Endothelial cell of umbilical vein (primary cell): ENCODE measurements at regions of chr5 and their contacts with region 1.

Region 1: GRCh38 chr5:138789771-138790242 is 36.6 kb downstream of the CTNNA1 start:
- DNase-seq: peak; percentile 50
- H3K4me3 ChIP-seq: no peak overlapping the region
- H3K27ac ChIP-seq: no peak overlapping the region
- H3K4me1 ChIP-seq: no peaks in the 10 kb centered on the region
- H3K27me3 ChIP-seq: no peaks in the 10 kb centered on the region
- CTCF ChIP-seq: peak; percentile 65 to 67
- POLR2A ChIP-seq: no peak

Region 2: DNA sequence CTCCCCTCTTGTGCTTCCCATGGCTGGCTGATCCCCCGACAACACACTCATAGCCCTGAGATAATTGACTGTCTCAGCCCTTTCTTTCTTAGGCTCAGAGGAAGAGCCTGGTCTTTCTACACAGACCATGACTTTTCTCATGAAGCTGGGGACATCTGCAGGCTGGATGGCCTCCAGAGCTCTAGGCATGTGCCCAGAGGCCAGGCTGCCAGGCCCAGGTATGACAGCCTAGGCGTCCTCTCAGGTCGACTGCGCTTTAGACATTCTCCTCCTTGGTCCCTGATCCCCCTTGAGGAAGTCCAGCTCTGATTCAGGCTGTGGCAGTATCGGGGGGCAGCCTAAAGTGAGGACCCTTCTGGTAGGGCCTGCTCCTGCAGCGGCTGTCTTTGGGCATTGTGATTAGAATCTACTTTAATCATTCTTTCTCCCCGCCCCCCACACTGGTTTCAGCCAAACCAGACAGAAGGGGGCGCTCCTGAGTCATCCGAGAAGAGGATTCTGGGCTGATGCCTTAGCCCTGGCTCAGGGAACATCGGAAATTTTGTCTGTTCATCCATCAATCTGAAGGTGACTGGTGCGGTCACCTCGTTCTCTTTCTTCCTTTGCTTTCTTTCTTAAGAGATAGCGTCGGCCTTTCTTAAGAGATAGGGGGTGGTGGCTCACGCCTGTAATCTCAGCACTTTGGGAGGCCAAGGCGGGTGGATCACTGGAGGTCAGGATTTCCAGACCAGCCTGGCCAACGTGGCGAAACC is 148.1 kb before region 1 on chr5:
- CTCF ChIA-PET with region 1: interaction called, 11 read pairs
- POLR2A ChIA-PET with region 1: no interaction called
- dilution Hi-C with region 1: no loop called
- intact Hi-C with region 1: no loop called
- DNase-seq: peak; percentile 64
- H3K4me3 ChIP-seq: no peak overlapping the region
- H3K27ac ChIP-seq: no peak overlapping the region
- H3K4me1 ChIP-seq: no peaks in the 10 kb centered on the region
- H3K27me3 ChIP-seq: peaks cover 0 to 6% of the 10 kb centered on the region in 2 experiments
- CTCF ChIP-seq: peak; percentile 79 to 86
- POLR2A ChIP-seq: no peak

Region 3: GRCh38 chr5:138772986-138773594 is 16.7 kb before region 1 on chr5:
- CTCF ChIA-PET with region 1: interaction called, 18 read pairs
- POLR2A ChIA-PET with region 1: interaction called, 4 read pairs
- dilution Hi-C with region 1: no loop called
- intact Hi-C with region 1: no loop called
- DNase-seq: no peak
- H3K4me3 ChIP-seq: no peak overlapping the region
- H3K27ac ChIP-seq: no peak overlapping the region
- H3K4me1 ChIP-seq: no peaks in the 10 kb centered on the region
- H3K27me3 ChIP-seq: no peaks in the 10 kb centered on the region
- CTCF ChIP-seq: no peak
- POLR2A ChIP-seq: no peak

Region 4: GRCh38 chr5:138803285-138803684 is 13.5 kb after region 1 on chr5:
- CTCF ChIA-PET with region 1: interaction called, 37 read pairs
- POLR2A ChIA-PET with region 1: no interaction called
- dilution Hi-C with region 1: no loop called
- intact Hi-C with region 1: no loop called
- DNase-seq: no peak
- H3K4me3 ChIP-seq: no peak overlapping the region
- H3K27ac ChIP-seq: no peak overlapping the region
- H3K4me1 ChIP-seq: no peaks in the 10 kb centered on the region
- H3K27me3 ChIP-seq: no peaks in the 10 kb centered on the region
- CTCF ChIP-seq: no peak
- POLR2A ChIP-seq: no peak

Region 5: GRCh38 chr5:138819081-138819480 is 29.3 kb after region 1 on chr5:
- CTCF ChIA-PET with region 1: interaction called, 41 read pairs
- POLR2A ChIA-PET with region 1: no interaction called
- dilution Hi-C with region 1: no loop called
- intact Hi-C with region 1: loop called (anchors 2 kb)
- DNase-seq: no peak
- H3K4me3 ChIP-seq: no peak overlapping the region
- H3K27ac ChIP-seq: no peak overlapping the region
- H3K4me1 ChIP-seq: peaks cover 21% of the 10 kb centered on the region
- H3K27me3 ChIP-seq: no peaks in the 10 kb centered on the region
- CTCF ChIP-seq: no peak
- POLR2A ChIP-seq: no peak

Region 6: DNA sequence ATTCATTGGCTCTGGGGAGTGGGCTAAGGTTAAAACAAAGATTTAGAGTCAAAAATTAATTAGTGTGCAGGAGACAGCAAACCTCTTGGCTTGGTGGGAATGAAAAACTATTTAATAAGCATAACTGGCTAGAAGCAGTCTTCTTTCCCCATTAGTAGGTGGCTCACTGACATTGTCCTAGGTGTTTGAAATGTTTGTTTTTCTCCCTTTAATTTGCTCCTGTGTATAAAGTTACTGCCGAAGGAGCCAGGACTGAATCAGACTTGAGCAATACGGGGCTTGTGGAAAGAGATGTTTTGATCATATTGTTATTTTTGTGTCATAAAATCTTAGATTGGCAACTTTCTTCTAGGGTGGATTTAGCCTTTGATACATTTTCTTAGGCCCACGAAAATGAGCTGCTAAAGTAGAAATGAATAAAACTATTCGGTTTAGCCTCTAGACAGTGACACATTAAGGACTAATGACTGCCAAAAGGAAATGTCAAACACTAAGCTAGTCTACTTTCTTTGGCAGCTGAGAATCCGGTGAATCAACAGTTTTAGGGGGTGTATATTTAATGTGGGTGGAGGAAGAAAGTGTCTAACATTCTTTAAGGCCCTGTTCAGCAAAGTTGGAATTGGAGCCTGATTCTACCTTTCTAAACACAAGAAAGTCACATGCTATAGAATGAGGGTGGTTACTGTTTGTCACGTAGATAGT is 55.2 kb after region 1 on chr5:
- CTCF ChIA-PET with region 1: interaction called, 11 read pairs
- POLR2A ChIA-PET with region 1: no interaction called
- dilution Hi-C with region 1: no loop called
- intact Hi-C with region 1: no loop called
- DNase-seq: peak; percentile 74
- H3K4me3 ChIP-seq: no peak overlapping the region
- H3K27ac ChIP-seq: peak overlapping the region; percentile 62
- H3K4me1 ChIP-seq: peaks cover 33% of the 10 kb centered on the region
- H3K27me3 ChIP-seq: no peaks in the 10 kb centered on the region
- CTCF ChIP-seq: no peak
- POLR2A ChIP-seq: no peak

Region 7: DNA sequence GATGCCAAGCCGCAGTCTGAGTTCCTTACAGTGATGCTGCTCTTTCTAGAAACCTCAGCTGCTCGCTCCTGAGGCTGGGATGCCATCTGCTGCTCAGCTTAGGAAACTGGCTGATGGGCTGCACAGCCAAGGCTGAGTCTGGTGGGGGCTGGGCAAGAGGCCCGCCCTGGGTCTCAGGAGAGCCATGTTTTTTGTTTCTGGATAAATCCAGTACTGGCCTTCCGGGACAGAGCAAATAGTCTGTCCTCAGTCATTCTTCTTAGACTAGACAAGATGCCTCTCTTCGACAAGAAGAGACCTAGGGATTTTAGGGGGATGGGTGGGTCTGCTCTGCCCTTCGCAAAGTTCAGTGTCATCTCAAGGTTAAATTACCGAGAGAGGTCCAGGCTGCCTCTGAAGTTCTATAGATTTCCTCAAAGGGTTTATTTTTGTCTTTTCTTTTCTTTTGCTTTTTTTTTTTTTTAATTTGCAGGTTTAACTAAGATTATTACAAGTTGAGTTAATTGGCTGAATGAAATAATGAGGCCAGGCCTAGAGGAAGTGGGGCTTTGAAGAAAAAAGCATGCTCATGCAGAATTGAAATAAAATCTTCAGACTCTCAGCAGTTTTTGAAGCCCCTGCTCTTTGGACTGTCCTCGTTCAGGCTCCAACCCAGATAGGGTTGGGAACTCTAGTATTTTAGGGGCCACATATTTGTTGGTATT is 473.1 kb after region 1 on chr5:
- CTCF ChIA-PET with region 1: interaction called, 44 read pairs
- POLR2A ChIA-PET with region 1: no interaction called
- dilution Hi-C with region 1: no loop called
- intact Hi-C with region 1: loop called (anchors 1 kb)
- DNase-seq: peak; percentile 87
- H3K4me3 ChIP-seq: no peak overlapping the region
- H3K27ac ChIP-seq: no peak overlapping the region
- H3K4me1 ChIP-seq: no peaks in the 10 kb centered on the region
- H3K27me3 ChIP-seq: peaks cover 2 to 10% of the 10 kb centered on the region in 2 experiments
- CTCF ChIP-seq: peak; percentile 87 to 88
- POLR2A ChIP-seq: no peak